IMR-90 (cell line): ENCODE measurements at regions of chr9 and their contacts with region 1.

Region 1: DNA sequence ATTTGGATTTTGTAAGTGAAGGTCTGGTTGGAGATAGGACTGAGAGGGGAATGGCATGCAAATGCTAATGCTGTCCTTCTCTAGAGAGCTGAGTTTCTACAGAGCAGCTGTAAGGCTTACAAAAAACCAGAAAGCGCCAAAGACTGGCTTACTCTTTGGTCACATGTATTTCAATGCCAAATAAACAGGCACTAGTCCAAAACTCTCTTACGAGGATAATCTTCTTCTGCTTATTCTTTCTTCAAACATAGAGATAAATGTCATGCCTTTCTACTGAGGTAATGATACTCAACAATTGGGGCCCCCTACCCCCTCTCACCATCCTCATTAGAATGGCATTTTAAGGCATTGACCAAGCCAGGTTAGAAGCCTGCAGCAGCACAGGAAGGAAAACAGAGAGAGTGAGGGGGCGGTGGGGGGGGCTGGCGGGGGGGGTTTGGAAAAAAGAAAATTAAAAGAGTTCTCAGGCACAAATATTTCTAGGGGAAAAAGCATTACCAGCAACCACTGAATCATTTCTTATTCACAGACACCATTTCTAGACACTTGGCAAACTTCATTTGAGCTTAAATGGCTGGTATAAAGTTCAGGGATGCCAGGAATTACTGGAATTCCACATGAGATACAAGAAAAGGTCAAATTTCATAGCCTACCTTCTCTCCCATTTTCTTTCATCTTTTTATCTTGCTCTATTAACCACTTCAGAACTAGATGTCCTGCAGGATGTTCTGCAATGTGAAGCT is 34.0 kb downstream of the PUM3 start:
- DNase-seq: peak; percentile 99
- ATAC-seq: peak; percentile 93
- H3K4me3 ChIP-seq: no peak overlapping the region
- H3K27ac ChIP-seq: peak overlapping the region; percentile 100; the same call in 1 of the 2 replicates
- H3K4me1 ChIP-seq: peaks cover 20% of the 10 kb centered on the region
- H3K27me3 ChIP-seq: no peaks in the 10 kb centered on the region
- CTCF ChIP-seq: no peak
- POLR2A ChIP-seq: peak; percentile 56
- RAD21 ChIP-seq: no peak

Region 2: GRCh38 chr9:2655411-2655901 is 154.4 kb before region 1 on chr9:
- CTCF ChIA-PET with region 1: no interaction called
- POLR2A ChIA-PET with region 1: no interaction called
- dilution Hi-C with region 1: no loop called
- in situ Hi-C with region 1: no loop called
- intact Hi-C with region 1: loop called (anchors 10 kb)
- DNase-seq: peak; percentile 96
- ATAC-seq: peak; percentile 92
- H3K4me3 ChIP-seq: no peak overlapping the region
- H3K27ac ChIP-seq: no peak overlapping the region
- H3K4me1 ChIP-seq: peaks cover 4% of the 10 kb centered on the region; the same call in 1 of the 2 replicates
- H3K27me3 ChIP-seq: no peaks in the 10 kb centered on the region
- CTCF ChIP-seq: no peak
- POLR2A ChIP-seq: no peak
- RAD21 ChIP-seq: no peak; the same call in 1 of the 2 replicates